Activated T-helper 2 cell treated with anti-CD3 and anti-CD28 coated beads, Interferon-gamma antibody, Interleukin-2, Interleukin-4, amounts not matched to agents 10 μg/mL and 5 μg/mL and 100 μg/mL, durations not matched to agents 14 hours and 24 hours and 36 hours (primary cell): ENCODE measurements at regions of chrX and their contacts with region 1.

Region 1: DNA sequence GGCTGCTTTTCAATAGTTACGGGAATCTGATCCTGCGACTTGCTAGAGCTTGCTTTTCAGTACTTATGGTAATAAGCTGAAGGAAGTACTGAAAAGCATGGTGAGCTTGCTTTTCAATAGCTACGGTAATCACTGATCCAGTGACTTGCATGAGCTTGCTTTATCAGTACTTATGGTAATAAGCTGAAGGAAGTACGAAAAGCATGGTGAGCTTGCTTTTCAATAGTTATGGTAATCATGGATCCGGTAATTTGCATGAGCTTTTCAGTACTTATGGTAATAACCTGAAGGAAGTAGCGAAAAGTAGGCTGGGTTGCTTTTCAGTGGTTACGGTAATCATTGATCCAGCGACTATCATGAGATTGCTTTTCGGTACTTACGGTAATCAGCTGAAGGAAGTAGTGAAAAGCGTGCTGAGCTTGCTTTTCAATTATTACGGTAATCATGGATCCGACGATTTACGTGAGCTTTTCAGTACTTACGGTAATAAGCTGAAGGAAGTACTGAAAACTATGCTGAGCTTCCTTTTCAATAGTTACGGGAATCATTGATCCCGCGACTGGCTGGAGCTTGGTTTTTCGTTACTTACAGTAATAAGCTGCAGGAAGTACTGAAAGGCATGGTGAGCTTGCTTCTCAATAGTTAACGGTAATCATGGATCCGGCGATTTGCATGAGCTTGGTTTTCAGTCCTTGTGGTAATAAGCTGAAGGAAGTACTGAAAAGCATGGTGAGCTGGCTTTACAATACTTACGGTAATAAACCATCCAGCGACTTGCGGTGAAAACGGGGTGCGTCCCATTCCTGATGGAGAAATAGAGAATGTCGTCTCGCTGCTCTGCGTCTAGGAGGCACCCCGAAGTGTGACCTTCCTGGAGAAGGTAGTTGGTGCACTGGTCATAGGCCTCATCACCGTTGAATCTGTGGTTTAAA is 6.5 kb downstream of the CRLF2 start:
- DNase-seq: peak; percentile 29
- H3K4me3 Mint-ChIP-seq: peak overlapping the region; percentile 43
- H3K27ac Mint-ChIP-seq: no peak overlapping the region
- H3K4me1 Mint-ChIP-seq: peaks cover 21% of the 10 kb centered on the region
- H3K27me3 Mint-ChIP-seq: no peaks in the 10 kb centered on the region

Region 2: GRCh38 chrX:1026263-1027015 is 179.5 kb before region 1 on chrX:
- intact Hi-C with region 1: no loop called
- DNase-seq: no peak
- H3K4me3 Mint-ChIP-seq: peak overlapping the region; percentile 47
- H3K27ac Mint-ChIP-seq: no peak overlapping the region
- H3K4me1 Mint-ChIP-seq: peaks cover 12% of the 10 kb centered on the region
- H3K27me3 Mint-ChIP-seq: no peaks in the 10 kb centered on the region

Region 3: GRCh38 chrX:1165535-1166196 is 40.3 kb before region 1 on chrX:
- intact Hi-C with region 1: loop called (anchors 5 kb)
- DNase-seq: no peak
- H3K4me3 Mint-ChIP-seq: peak overlapping the region; percentile 8
- H3K27ac Mint-ChIP-seq: no peak overlapping the region
- H3K4me1 Mint-ChIP-seq: peaks cover 12% of the 10 kb centered on the region
- H3K27me3 Mint-ChIP-seq: peaks cover 12% of the 10 kb centered on the region

Region 4: DNA sequence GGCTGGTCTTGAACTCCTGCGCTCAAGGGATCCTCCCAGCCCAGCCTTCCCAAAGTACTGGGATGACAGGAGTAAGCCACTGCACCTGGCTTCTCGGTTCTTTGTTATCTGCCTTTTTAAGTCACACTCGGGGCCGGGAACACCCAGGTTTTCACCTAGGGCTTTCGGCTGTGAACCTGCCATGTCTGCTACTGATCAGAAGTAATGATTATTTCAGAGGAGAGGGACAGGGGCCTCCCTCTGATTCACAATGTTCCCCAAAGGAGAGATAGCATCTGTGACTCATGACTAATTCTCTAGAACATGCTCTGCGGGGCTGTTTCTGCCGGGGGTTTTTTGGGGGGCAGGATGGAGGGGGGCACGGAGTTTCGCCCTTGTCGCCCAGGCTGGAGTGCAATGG is 20.4 kb before region 1 on chrX:
- intact Hi-C with region 1: loop called (anchors 1 kb)
- DNase-seq: no peak
- H3K4me3 Mint-ChIP-seq: no peak overlapping the region
- H3K27ac Mint-ChIP-seq: no peak overlapping the region
- H3K4me1 Mint-ChIP-seq: peaks cover 8% of the 10 kb centered on the region
- H3K27me3 Mint-ChIP-seq: no peaks in the 10 kb centered on the region

Region 5: DNA sequence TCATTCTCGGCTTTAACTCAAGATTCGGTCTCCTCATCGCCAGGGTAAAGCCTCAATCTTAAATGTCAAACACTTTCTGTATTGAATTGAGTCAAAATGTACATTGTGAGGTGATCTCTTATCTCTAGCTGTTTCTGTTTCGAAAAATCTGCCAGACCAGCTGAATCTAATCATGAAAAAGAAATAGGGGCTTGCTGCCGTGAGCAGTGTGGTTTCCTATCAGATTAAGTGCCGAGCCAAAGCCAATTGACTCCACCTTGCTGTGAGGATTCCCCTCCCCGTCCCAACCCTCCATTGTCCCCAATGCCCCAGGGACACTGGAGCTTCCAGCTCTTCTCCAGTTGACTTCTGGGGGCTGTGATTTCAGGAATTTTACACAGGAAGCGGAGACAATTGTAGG is 19.0 kb after region 1 on chrX:
- intact Hi-C with region 1: loop called (anchors 1 kb)
- DNase-seq: peak; percentile 64
- H3K4me3 Mint-ChIP-seq: no peak overlapping the region
- H3K27ac Mint-ChIP-seq: no peak overlapping the region
- H3K4me1 Mint-ChIP-seq: peaks cover 13% of the 10 kb centered on the region
- H3K27me3 Mint-ChIP-seq: peaks cover 18% of the 10 kb centered on the region